Panc1 (cell line): ENCODE measurements at regions of chr17 and their contacts with region 1.

Region 1: DNA sequence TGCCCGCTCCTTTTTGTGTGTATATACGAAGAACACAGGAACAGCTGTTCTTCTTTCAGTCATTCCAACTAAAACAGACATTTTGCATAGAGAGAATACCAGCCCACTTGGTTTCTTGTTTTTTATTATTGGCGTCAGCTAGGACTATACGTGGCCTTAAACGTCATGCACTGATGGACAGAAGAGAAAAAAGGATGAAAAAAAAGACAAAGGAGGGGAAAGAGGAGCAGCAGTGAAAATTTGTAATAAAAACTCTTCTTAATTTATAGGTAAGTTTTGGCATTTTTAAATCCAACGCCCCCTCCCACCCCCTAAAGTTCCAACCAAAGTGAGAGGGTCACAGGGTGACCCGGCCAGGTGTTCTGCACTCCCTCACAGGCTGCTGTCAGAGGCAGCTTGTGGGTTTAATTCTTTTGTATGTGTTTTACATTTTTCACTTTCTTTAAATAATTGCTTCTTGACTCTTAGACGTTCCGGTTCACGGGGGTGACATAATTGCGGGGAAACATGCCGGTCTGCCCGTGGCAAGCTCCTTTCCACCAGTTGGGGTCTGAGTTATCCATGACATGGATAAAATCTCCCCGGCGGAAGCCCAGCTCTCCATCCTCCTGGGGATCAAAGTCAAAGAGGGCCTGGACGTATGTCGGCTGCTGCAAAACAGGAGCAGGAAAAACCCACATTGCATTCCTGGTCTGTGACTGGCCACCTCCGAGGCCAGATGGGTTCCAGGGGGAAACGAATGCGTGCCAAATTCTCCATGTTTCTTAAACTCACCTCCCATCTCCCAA is 30.9 kb upstream of the SLC25A19 start:
- DNase-seq: no peak
- ATAC-seq: no peak
- H3K4me3 ChIP-seq: no peak overlapping the region
- H3K27ac ChIP-seq: no peak overlapping the region
- H3K4me1 ChIP-seq: no peaks in the 10 kb centered on the region
- H3K27me3 ChIP-seq: no peaks in the 10 kb centered on the region
- CTCF ChIP-seq: no peak

Region 2: GRCh38 chr17:74981979-74982662 is 338.0 kb before region 1 on chr17:
- CTCF ChIA-PET with region 1: no interaction called
- POLR2A ChIA-PET with region 1: no interaction called
- in situ Hi-C with region 1: no loop called
- intact Hi-C with region 1: no loop called
- DNase-seq: no peak
- ATAC-seq: peak; percentile 96
- H3K4me3 ChIP-seq: peak overlapping the region; percentile 63 to 83
- H3K27ac ChIP-seq: peak overlapping the region; percentile 86
- H3K4me1 ChIP-seq: peaks cover 13% of the 10 kb centered on the region
- H3K27me3 ChIP-seq: no peaks in the 10 kb centered on the region
- CTCF ChIP-seq: no peak

Region 3: DNA sequence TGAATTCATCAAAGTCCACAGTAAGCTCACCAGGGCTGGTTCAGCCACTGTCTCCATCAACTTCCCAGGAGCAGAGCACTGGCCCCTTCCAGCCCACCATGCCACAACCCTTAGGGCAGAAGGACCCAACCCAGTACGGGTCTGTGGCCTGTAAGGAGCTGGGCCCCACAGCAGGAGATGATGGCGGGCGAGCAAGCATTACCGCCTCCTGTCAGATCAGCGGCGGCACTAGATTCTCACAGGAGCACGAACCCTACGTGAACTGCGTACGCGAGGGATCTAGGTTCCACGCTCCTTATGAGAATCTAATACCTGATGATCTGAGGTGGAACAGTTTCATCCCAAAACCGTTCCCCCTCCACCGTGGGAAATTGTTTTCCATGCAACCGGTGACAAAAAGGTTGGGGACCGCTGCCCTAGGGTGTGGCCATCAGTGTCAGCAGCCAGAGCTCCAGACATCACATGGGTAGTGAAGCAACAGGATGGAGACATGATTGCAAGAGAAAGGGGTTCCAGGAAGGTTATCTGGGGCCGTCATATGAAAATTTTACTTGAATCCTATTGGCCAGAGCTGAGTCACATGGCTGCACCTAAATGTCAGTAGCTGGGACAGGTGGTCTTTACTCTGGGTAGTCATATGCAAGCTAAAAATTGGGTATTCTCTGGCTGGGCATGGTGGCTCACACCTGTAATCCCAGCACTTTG is 18.4 kb before region 1 on chr17:
- CTCF ChIA-PET with region 1: no interaction called
- POLR2A ChIA-PET with region 1: no interaction called
- in situ Hi-C with region 1: no loop called
- intact Hi-C with region 1: no loop called
- DNase-seq: no peak
- ATAC-seq: no peak
- H3K4me3 ChIP-seq: no peak overlapping the region
- H3K27ac ChIP-seq: no peak overlapping the region
- H3K4me1 ChIP-seq: no peaks in the 10 kb centered on the region
- H3K27me3 ChIP-seq: no peaks in the 10 kb centered on the region
- CTCF ChIP-seq: no peak

Region 4: DNA sequence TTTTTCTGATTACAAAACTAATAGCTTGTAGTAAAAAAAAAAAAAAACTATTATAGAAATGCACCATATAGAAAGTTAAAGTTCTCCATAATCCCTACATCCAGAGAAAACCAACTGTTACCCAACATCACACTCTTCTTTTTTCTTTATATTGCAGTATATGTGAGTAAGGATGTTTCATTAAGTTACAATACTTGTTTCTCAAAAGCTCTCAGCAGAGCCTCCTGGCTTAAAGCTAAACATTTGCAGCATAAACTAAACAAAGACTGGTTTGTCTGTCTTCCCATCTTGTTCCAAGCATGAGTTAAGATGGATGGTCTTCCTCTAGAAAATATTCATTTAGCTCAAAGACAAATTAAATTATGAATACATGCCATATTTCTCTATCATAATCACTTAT is 60.2 kb after region 1 on chr17:
- CTCF ChIA-PET with region 1: interaction called, 14 read pairs
- POLR2A ChIA-PET with region 1: interaction called, 7 read pairs
- in situ Hi-C with region 1: no loop called
- intact Hi-C with region 1: no loop called
- DNase-seq: no peak
- ATAC-seq: no peak
- H3K4me3 ChIP-seq: no peak overlapping the region
- H3K27ac ChIP-seq: no peak overlapping the region
- H3K4me1 ChIP-seq: peaks cover 16% of the 10 kb centered on the region; the same call in 1 of the 2 replicates
- H3K27me3 ChIP-seq: no peaks in the 10 kb centered on the region
- CTCF ChIP-seq: no peak

Region 5: DNA sequence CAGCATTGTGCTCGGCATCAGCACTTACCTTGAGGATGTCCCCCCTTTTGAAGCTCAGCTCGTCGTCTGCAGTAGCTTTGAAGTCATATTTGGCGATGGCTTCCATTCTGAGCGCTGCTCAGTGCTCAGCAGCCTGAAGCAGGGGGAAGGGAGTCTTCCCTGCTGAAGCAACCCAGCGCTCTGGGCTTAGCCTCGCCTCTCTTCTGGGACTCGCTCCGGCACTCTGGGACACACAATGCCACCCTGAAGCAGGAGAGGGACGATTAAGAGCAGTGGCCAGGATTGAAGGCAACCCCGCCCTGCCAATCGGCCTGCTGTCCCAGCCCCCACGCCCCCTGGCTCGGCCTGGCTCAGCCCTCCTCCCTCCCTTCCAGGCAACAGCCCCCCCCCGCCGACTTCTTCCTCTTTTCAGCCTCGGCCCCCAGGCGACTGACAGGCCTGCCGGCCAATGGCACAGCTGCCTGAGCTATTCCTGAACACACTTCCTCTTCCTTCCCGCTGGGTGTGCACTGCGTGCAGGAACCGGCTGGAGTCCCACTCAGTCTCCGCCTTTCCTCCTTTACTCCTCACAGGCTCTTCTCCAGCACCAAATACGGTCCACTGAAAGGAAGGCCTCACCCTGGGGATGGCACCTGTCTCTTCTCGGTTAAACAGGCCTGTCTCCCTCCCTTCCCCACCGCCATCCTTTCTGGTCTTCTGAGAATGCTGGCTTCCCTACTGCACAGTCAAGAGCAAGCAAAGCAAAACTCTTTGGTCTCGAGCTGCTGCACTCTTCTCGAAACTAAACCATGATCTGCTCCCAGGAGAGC is 73.6 kb after region 1 on chr17:
- CTCF ChIA-PET with region 1: interaction called, 12 read pairs
- POLR2A ChIA-PET with region 1: no interaction called
- in situ Hi-C with region 1: no loop called
- intact Hi-C with region 1: no loop called
- DNase-seq: peak; percentile 77
- ATAC-seq: peak; percentile 99
- H3K4me3 ChIP-seq: peak overlapping the region; percentile 74 to 82
- H3K27ac ChIP-seq: peak overlapping the region; percentile 93
- H3K4me1 ChIP-seq: peaks cover 47% of the 10 kb centered on the region
- H3K27me3 ChIP-seq: no peaks in the 10 kb centered on the region
- CTCF ChIP-seq: no peak

Region 6: GRCh38 chr17:75405365-75406221 is 85.5 kb after region 1 on chr17 and contains the start of gene GRB2:
- CTCF ChIA-PET with region 1: interaction called, 11 read pairs
- POLR2A ChIA-PET with region 1: interaction called, 4 read pairs
- in situ Hi-C with region 1: no loop called
- intact Hi-C with region 1: loop called (anchors 1 kb)
- DNase-seq: peak; percentile 63
- ATAC-seq: peak; percentile 94
- H3K4me3 ChIP-seq: peak within 1 kb of the TSS; percentile 80 to 94
- H3K27ac ChIP-seq: peak within 1 kb of the TSS; percentile 78
- H3K4me1 ChIP-seq: peaks cover 10% of the 10 kb centered on the region
- H3K27me3 ChIP-seq: no peaks in the 10 kb centered on the region
- CTCF ChIP-seq: no peak
- total RNA-seq, gene GRB2: 148 TPM

Region 7: GRCh38 chr17:75447951-75448856 is 128.1 kb after region 1 on chr17:
- CTCF ChIA-PET with region 1: interaction called, 14 read pairs
- POLR2A ChIA-PET with region 1: no interaction called
- in situ Hi-C with region 1: no loop called
- intact Hi-C with region 1: no loop called
- DNase-seq: no peak
- ATAC-seq: no peak
- H3K4me3 ChIP-seq: no peak overlapping the region
- H3K27ac ChIP-seq: no peak overlapping the region
- H3K4me1 ChIP-seq: no peaks in the 10 kb centered on the region
- H3K27me3 ChIP-seq: no peaks in the 10 kb centered on the region
- CTCF ChIP-seq: no peak

Region 8: GRCh38 chr17:75549221-75550138 is 229.4 kb after region 1 on chr17:
- CTCF ChIA-PET with region 1: interaction called, 14 read pairs
- POLR2A ChIA-PET with region 1: no interaction called
- in situ Hi-C with region 1: no loop called
- intact Hi-C with region 1: no loop called
- DNase-seq: no peak
- ATAC-seq: peak; percentile 37
- H3K4me3 ChIP-seq: no peak overlapping the region
- H3K27ac ChIP-seq: no peak overlapping the region
- H3K4me1 ChIP-seq: peaks cover 23% of the 10 kb centered on the region
- H3K27me3 ChIP-seq: no peaks in the 10 kb centered on the region
- CTCF ChIP-seq: no peak

Region 9: GRCh38 chr17:75689441-75689873 is 369.4 kb after region 1 on chr17:
- CTCF ChIA-PET with region 1: interaction called, 14 read pairs
- POLR2A ChIA-PET with region 1: no interaction called
- in situ Hi-C with region 1: no loop called
- intact Hi-C with region 1: no loop called
- DNase-seq: no peak
- ATAC-seq: no peak
- H3K4me3 ChIP-seq: no peak overlapping the region
- H3K27ac ChIP-seq: peak overlapping the region; percentile 42; the same call in 1 of the 2 replicates
- H3K4me1 ChIP-seq: peaks cover 39% of the 10 kb centered on the region
- H3K27me3 ChIP-seq: no peaks in the 10 kb centered on the region
- CTCF ChIP-seq: no peak

Region 10: GRCh38 chr17:75959051-75959838 is 639.1 kb after region 1 on chr17:
- CTCF ChIA-PET with region 1: no interaction called
- POLR2A ChIA-PET with region 1: no interaction called
- in situ Hi-C with region 1: no loop called
- intact Hi-C with region 1: no loop called
- DNase-seq: no peak
- ATAC-seq: 0 out of 2 replicates have a peak, but pooled peaks have one; percentile 21
- H3K4me3 ChIP-seq: no peak overlapping the region
- H3K27ac ChIP-seq: no peak overlapping the region
- H3K4me1 ChIP-seq: no peaks in the 10 kb centered on the region; the same call in 1 of the 2 replicates
- H3K27me3 ChIP-seq: no peaks in the 10 kb centered on the region
- CTCF ChIP-seq: no peak